GM10248 (cell line): ENCODE measurements at regions of chr10 and their contacts with region 1.

Region 1: DNA sequence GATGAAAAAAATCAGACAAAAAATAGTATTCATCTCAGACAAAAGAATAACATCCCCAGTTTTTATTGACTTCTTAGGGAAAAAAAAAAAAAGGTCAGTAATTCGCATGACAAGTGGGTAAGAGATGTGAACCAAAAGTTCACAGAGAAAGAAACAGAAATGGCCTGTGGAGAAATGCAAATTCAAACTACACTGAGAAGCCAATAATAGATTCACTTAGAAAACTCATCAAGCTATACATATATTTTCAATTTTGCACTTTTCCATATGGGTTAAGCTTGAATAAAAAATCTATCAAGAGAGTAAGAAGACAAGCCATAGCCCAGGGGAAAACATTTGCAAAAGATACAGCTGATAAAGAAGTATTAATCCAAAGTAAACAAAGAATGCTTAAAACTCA is 28.0 kb downstream of the HERC4 start:
- DNase-seq: no peak
- CTCF ChIP-seq: no peak

Region 2: GRCh38 chr10:68032113-68032512 is 15.0 kb before region 1 on chr10:
- CTCF ChIA-PET with region 1: interaction called, 15 read pairs
- POLR2A ChIA-PET with region 1: no interaction called
- DNase-seq: no peak
- CTCF ChIP-seq: no peak

Region 3: GRCh38 chr10:68067029-68067428 is 19.9 kb after region 1 on chr10:
- CTCF ChIA-PET with region 1: interaction called, 14 read pairs
- POLR2A ChIA-PET with region 1: no interaction called
- DNase-seq: no peak
- CTCF ChIP-seq: no peak

Region 4: GRCh38 chr10:68082872-68083271 is 35.8 kb after region 1 on chr10:
- CTCF ChIA-PET with region 1: no interaction called
- POLR2A ChIA-PET with region 1: no interaction called
- DNase-seq: no peak
- CTCF ChIP-seq: peak; percentile 35